IMR-90 (cell line): ENCODE measurements at regions of chr13 and their contacts with region 1.

Region 1: DNA sequence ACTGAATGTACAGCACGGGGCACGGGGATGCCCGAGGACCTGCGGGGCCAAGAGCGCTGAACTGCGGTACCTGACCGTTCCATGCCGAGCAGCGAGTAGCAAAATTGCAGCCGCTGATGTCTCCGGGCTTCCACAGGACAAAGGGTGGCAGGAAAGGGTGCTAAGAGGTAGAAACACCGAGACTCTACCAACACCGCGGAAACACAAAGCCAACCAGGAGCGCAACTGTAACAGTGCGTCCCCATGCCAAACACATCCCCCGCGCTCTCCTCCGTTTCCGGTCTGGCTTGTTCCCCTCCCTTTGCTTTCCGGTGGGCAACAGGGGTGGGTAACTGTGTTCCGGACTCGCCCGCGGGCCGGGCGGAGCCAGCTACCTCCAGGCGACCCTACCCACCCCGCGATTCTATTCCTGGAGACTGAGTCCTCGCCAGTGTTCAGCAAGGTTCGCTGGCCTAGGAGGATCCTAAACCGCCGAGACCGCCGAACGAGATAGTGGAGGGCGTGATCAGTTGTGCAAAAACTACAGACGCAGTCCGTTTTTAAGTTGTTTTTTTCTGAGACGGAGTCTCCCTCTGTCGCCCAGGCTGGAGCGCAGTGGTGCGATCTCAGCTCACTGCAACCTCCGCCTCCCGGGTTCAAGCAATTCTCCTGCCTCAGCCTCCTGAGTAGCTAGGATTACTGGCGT is 34.9 kb upstream of the NEK3 start:
- DNase-seq: peak; percentile 83
- ATAC-seq: peak; percentile 98
- H3K4me3 ChIP-seq: peak overlapping the region; percentile 95
- H3K27ac ChIP-seq: peak overlapping the region; percentile 85
- H3K4me1 ChIP-seq: no peaks in the 10 kb centered on the region; the same call in 1 of the 2 replicates
- H3K27me3 ChIP-seq: no peaks in the 10 kb centered on the region
- CTCF ChIP-seq: no peak
- POLR2A ChIP-seq: peak; percentile 58; the same call in 1 of the 2 replicates
- RAD21 ChIP-seq: peak; percentile 10; the same call in 1 of the 2 replicates

Region 2: DNA sequence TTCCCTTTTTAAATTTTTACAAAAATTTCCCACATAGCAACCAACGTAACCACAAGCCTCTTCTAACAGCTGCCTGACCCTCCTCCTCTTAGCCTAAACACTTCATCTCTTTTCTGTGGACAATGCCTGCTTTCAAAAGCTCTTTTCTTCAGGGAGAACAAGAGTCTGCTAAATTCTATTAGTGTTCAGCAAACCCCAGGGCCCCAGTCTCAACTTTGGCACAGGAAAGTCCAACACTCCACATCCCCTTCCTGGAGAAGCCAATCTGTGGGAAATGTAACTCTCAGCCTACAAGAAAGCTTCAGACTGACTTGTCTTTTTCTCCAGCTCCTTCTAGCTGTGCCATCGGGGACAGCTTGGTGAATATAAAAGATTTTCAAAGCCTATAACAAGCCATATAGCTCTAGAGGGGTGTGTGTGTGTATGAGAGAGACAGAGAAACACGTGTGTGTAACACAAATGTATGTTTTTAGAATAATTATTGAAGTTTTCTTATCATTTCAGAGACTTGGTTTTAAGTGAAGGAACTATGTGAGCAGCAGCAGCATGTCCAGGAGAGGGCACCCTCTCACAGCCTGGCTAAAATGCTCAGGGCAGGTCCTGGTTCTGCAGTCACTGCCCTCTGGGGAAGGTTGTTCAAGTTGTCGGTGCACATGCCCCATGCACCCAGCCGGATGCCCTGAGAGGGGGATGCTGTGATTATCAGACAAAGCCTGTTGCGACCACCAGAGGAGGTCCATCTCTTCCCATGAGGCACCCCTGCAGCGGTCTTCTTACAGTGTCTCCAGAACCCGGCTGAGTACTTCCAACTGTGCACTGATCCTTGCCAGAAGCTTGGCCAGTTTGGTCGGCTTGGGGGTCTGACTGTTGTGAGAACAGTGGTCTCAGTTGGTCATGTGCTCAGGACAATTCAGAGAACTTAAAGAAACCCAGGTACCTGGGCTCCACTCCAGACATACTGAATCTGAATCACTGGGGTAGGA is 298.1 kb before region 1 on chr13:
- CTCF ChIA-PET with region 1: no interaction called
- POLR2A ChIA-PET with region 1: no interaction called
- dilution Hi-C with region 1: no loop called
- in situ Hi-C with region 1: loop called (anchors 10 kb)
- intact Hi-C with region 1: no loop called
- DNase-seq: peak; percentile 61
- ATAC-seq: peak; percentile 96
- H3K4me3 ChIP-seq: no peak overlapping the region
- H3K27ac ChIP-seq: no peak overlapping the region
- H3K4me1 ChIP-seq: no peaks in the 10 kb centered on the region
- H3K27me3 ChIP-seq: peaks cover 24% of the 10 kb centered on the region
- CTCF ChIP-seq: peak; percentile 81
- POLR2A ChIP-seq: no peak
- RAD21 ChIP-seq: peak; percentile 75

Region 3: GRCh38 chr13:51988988-51989618 is 205.2 kb before region 1 on chr13:
- CTCF ChIA-PET with region 1: no interaction called
- POLR2A ChIA-PET with region 1: no interaction called
- dilution Hi-C with region 1: no loop called
- in situ Hi-C with region 1: no loop called
- intact Hi-C with region 1: no loop called
- DNase-seq: no peak
- ATAC-seq: no peak
- H3K4me3 ChIP-seq: no peak overlapping the region
- H3K27ac ChIP-seq: no peak overlapping the region
- H3K4me1 ChIP-seq: no peaks in the 10 kb centered on the region
- H3K27me3 ChIP-seq: peaks cover 6% of the 10 kb centered on the region
- CTCF ChIP-seq: no peak
- POLR2A ChIP-seq: no peak
- RAD21 ChIP-seq: no peak

Region 4: GRCh38 chr13:52043675-52044074 is 150.7 kb before region 1 on chr13:
- CTCF ChIA-PET with region 1: no interaction called
- POLR2A ChIA-PET with region 1: no interaction called
- dilution Hi-C with region 1: no loop called
- in situ Hi-C with region 1: no loop called
- intact Hi-C with region 1: no loop called
- DNase-seq: no peak
- ATAC-seq: no peak
- H3K4me3 ChIP-seq: no peak overlapping the region
- H3K27ac ChIP-seq: no peak overlapping the region
- H3K4me1 ChIP-seq: no peaks in the 10 kb centered on the region
- H3K27me3 ChIP-seq: no peaks in the 10 kb centered on the region
- CTCF ChIP-seq: no peak
- POLR2A ChIP-seq: no peak
- RAD21 ChIP-seq: no peak

Region 5: DNA sequence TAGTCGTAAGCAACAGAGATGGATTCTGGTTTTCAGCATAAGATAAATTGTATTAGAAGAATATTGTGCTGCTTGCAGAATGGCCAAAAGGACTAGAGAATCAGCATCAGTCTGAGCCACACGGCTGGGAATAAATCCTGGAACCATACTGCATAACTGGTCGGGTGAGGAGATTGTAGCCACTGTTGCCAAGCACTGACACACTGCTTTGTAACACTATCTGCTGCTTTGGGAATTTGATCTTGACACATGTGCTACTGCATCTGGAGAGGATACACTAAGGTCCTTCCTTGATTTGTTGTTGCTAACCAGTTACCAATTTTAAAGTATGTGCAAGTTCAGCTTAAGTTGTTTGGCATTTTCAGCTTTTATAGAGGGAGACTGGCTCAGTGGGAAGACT is 449.8 kb after region 1 on chr13:
- CTCF ChIA-PET with region 1: no interaction called
- POLR2A ChIA-PET with region 1: no interaction called
- dilution Hi-C with region 1: no loop called
- in situ Hi-C with region 1: loop called (anchors 25 kb)
- intact Hi-C with region 1: no loop called
- DNase-seq: peak; percentile 54
- ATAC-seq: peak; percentile 62
- H3K4me3 ChIP-seq: no peak overlapping the region
- H3K27ac ChIP-seq: no peak overlapping the region
- H3K4me1 ChIP-seq: no peaks in the 10 kb centered on the region
- H3K27me3 ChIP-seq: no peaks in the 10 kb centered on the region
- CTCF ChIP-seq: no peak
- POLR2A ChIP-seq: no peak
- RAD21 ChIP-seq: no peak

Region 6: DNA sequence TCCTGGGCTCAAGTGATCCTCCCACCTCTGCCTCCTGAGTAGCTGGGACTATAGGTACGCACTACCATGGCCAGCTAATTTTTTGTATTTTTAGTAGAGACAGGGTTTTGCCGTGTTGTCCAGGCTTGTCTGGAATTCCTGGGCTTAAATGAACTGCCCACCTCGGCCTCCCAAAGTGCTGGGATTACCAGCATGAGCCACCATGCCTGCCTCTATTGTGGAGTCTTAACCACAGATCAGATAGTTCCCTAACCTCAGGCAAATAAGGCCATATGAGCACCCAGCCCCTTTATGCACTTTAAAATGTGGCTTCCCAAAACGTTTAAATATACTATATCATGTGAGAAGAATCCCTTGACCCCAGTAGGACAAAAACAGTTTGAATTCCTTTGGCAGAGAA is 528.9 kb after region 1 on chr13:
- CTCF ChIA-PET with region 1: no interaction called
- POLR2A ChIA-PET with region 1: no interaction called
- dilution Hi-C with region 1: no loop called
- in situ Hi-C with region 1: no loop called
- intact Hi-C with region 1: no loop called
- DNase-seq: no peak
- ATAC-seq: no peak
- H3K4me3 ChIP-seq: no peak overlapping the region
- H3K27ac ChIP-seq: no peak overlapping the region
- H3K4me1 ChIP-seq: no peaks in the 10 kb centered on the region
- H3K27me3 ChIP-seq: no peaks in the 10 kb centered on the region
- CTCF ChIP-seq: no peak
- POLR2A ChIP-seq: no peak
- RAD21 ChIP-seq: no peak